Activated CD4-positive, alpha-beta memory T cell treated with anti-CD3 and anti-CD28 coated beads for 36 hours (primary cell): ENCODE measurements at regions of chr2 and their contacts with region 1.

Region 1: GRCh38 chr2:28649481-28650214 is 102.0 kb upstream of the PPP1CB start:
- DNase-seq: peak; percentile 83
- H3K4me3 Mint-ChIP-seq: peak overlapping the region; percentile 34
- H3K27ac Mint-ChIP-seq: peak overlapping the region; percentile 77
- H3K4me1 Mint-ChIP-seq: peaks cover 28% of the 10 kb centered on the region
- H3K27me3 Mint-ChIP-seq: no peaks in the 10 kb centered on the region

Region 2: GRCh38 chr2:28681158-28681571 is 31.5 kb after region 1 on chr2:
- CTCF ChIA-PET with region 1: no interaction called
- POLR2A ChIA-PET with region 1: no interaction called
- intact Hi-C with region 1: loop called (anchors 1 kb)
- DNase-seq: peak; percentile 85
- H3K4me3 Mint-ChIP-seq: no peak overlapping the region
- H3K27ac Mint-ChIP-seq: peak overlapping the region; percentile 89
- H3K4me1 Mint-ChIP-seq: peaks cover 43% of the 10 kb centered on the region
- H3K27me3 Mint-ChIP-seq: no peaks in the 10 kb centered on the region